ENCODE measurements at regions of chr2 and their contacts with region 1.

Region 1: DNA sequence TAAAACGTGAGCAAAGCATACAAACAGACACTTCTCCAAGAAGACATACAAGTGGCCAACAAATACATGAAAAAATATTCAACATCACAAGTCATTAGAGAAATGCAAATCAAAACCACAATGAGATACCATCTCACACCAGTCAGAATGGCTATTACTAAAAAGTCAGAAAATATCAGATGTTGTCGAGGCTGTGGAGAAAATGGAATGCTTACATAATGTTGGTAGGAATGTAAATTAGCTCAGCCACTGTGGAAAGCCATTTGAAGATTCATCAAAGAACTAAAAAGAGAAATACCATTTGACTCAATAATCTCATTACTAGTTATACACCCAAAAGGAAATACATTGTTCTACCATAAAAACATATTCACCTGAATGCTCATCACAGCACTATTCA is 825.7 kb downstream of the SUCLG1 start:
- DNase-seq: no peak
- ATAC-seq: no peak
- H3K4me3 Mint-ChIP-seq: no peak overlapping the region
- H3K27ac Mint-ChIP-seq: no peak overlapping the region
- H3K4me1 Mint-ChIP-seq: no peaks in the 10 kb centered on the region
- H3K27me3 Mint-ChIP-seq: no peaks in the 10 kb centered on the region

Region 2: DNA sequence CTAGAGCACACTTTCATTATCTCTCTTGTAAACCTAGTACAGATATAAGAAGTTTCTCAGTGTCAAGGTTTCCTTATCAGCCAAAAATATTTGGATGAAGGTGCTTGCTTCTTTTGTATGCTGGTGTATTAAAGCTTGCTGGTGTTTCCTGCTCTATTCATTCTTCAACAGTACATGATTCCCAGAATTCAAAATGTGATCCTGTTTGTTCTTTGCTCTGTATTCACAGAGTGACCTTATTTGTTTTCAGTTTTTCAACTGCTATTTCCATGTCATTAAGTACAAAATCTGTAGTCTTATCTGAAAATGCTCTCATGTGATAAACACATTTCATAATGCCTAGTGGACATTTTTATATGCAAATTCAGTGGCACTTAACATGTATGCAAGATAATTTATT is 360.1 kb before region 1 on chr2:
- CTCF ChIA-PET with region 1: no interaction called
- POLR2A ChIA-PET with region 1: no interaction called
- intact Hi-C with region 1: no loop called
- DNase-seq: no peak
- ATAC-seq: no peak
- H3K4me3 Mint-ChIP-seq: no peak overlapping the region
- H3K27ac Mint-ChIP-seq: no peak overlapping the region
- H3K4me1 Mint-ChIP-seq: no peaks in the 10 kb centered on the region
- H3K27me3 Mint-ChIP-seq: no peaks in the 10 kb centered on the region

Region 3: DNA sequence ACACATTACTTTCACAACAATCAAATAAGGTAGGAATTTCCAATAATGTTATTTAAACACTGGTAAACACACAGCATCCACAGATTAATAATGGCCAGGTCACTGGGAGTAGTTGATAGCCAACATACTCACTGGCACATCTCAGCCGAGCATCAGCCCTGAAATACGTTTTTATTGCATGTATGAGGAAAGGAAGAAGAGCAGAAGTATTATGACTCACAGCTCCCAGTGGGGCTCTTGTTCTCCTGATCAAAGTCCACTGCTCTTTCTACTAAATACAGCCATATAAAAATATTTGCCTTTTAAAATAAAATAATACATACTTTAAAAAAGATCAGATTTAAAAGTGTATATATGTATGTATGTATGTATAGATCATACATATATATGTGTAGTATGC is 174.0 kb before region 1 on chr2:
- CTCF ChIA-PET with region 1: no interaction called
- POLR2A ChIA-PET with region 1: no interaction called
- intact Hi-C with region 1: no loop called
- DNase-seq: no peak
- ATAC-seq: no peak
- H3K4me3 Mint-ChIP-seq: no peak overlapping the region
- H3K27ac Mint-ChIP-seq: no peak overlapping the region
- H3K4me1 Mint-ChIP-seq: no peaks in the 10 kb centered on the region
- H3K27me3 Mint-ChIP-seq: no peaks in the 10 kb centered on the region

Region 4: GRCh38 chr2:83572400-83572799 is 61.0 kb before region 1 on chr2:
- CTCF ChIA-PET with region 1: no interaction called
- POLR2A ChIA-PET with region 1: no interaction called
- intact Hi-C with region 1: loop called in 1 of 2 experiments (anchors 10 kb)
- DNase-seq: no peak
- ATAC-seq: no peak
- H3K4me3 Mint-ChIP-seq: no peak overlapping the region
- H3K27ac Mint-ChIP-seq: no peak overlapping the region
- H3K4me1 Mint-ChIP-seq: no peaks in the 10 kb centered on the region
- H3K27me3 Mint-ChIP-seq: no peaks in the 10 kb centered on the region

Measured in activated CD4-positive, alpha-beta T cell treated with anti-CD3 and anti-CD28 coated beads for 36 hours (primary cell).